ENCODE measurements at regions of chrX and their contacts with region 1.

Region 1: GRCh38 chrX:103629318-103630170 is 769 bp downstream of the TCEAL1 start:
- H3K4me3 Mint-ChIP-seq: peak overlapping the region; percentile 94
- H3K27ac Mint-ChIP-seq: peak overlapping the region; percentile 96
- H3K4me1 Mint-ChIP-seq: peaks cover 15% of the 10 kb centered on the region
- H3K27me3 Mint-ChIP-seq: no peaks in the 10 kb centered on the region

Region 2: GRCh38 chrX:103674531-103675454 is 45.2 kb after region 1 on chrX:
- intact Hi-C with region 1: loop called (anchors 5 kb)
- H3K4me3 Mint-ChIP-seq: no peak overlapping the region
- H3K27ac Mint-ChIP-seq: no peak overlapping the region
- H3K4me1 Mint-ChIP-seq: no peaks in the 10 kb centered on the region
- H3K27me3 Mint-ChIP-seq: no peaks in the 10 kb centered on the region

Region 3: DNA sequence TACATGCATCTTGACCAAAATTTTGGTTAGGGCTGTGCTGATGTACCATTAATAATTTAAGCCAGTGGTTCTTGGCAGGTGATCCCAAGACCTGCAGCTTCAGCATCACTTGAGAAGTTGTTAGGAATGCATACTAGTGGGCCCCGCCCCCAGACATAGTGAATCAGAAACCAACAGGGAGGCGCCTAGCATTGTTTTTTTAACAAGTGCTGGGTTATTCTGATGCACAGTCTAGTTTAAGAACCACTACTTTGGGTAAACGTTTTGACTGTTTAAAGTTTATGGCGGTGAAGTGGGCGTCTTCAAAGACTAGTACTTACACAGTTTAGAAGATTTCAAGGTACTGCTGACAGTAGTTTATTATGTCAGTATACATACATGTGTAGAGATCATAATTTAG is 560.3 kb after region 1 on chrX:
- intact Hi-C with region 1: no loop called
- H3K4me3 Mint-ChIP-seq: no peak overlapping the region
- H3K27ac Mint-ChIP-seq: no peak overlapping the region
- H3K4me1 Mint-ChIP-seq: no peaks in the 10 kb centered on the region
- H3K27me3 Mint-ChIP-seq: no peaks in the 10 kb centered on the region